Activated CD8-positive, alpha-beta T cell treated with anti-CD3 and anti-CD28 coated beads for 36 hours (primary cell): ENCODE measurements at regions of chr2 and their contacts with region 1.

Region 1: DNA sequence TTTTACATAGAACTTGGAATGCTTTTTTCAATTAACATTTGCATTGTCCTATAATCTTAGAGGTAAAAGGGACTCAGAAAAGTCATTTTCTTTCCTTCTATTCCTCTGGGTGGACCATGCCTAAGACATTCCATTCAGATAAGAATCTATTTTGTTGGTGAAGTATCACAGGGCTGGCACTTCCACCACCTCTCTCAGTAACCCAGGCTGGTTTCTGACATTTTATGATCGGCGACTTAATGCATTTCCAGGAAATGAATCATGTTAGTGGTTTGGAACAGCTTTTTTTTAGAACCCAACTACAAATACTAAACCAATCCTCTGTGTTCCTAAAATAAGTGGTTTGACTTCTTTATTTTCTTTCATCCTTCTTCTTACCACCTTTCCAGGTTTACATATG is 27.0 kb downstream of the GAD1 start:
- DNase-seq: peak; percentile 39
- ATAC-seq: peak; percentile 79
- H3K4me3 Mint-ChIP-seq: no peak overlapping the region
- H3K27ac Mint-ChIP-seq: peak overlapping the region; percentile 16
- H3K4me1 Mint-ChIP-seq: peaks cover 21% of the 10 kb centered on the region
- H3K27me3 Mint-ChIP-seq: peaks cover 10% of the 10 kb centered on the region
- CTCF ChIP-seq: no peak

Region 2: DNA sequence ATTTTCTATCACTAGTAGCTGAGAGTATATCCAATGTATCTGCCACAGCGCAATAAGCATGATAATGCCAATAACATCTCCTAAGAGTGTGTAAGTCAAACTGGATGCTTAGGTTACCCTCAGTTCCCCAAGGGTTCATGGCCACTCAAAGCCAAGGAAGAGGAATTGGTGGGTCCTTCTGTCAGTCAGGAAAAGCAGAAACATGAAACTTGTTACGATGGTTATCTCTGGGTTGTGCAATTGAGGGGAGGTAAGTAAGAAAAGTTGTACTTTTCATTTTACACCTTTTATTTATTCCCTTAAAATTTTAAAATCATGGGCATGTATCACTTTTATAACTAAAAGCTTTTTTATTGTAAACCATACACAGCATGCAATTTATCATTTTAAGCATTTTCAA is 37.1 kb before region 1 on chr2:
- CTCF ChIA-PET with region 1: no interaction called
- POLR2A ChIA-PET with region 1: no interaction called
- intact Hi-C with region 1: no loop called
- DNase-seq: no peak
- ATAC-seq: no peak
- H3K4me3 Mint-ChIP-seq: no peak overlapping the region
- H3K27ac Mint-ChIP-seq: no peak overlapping the region
- H3K4me1 Mint-ChIP-seq: no peaks in the 10 kb centered on the region
- H3K27me3 Mint-ChIP-seq: peaks cover 5% of the 10 kb centered on the region
- CTCF ChIP-seq: no peak

Region 3: DNA sequence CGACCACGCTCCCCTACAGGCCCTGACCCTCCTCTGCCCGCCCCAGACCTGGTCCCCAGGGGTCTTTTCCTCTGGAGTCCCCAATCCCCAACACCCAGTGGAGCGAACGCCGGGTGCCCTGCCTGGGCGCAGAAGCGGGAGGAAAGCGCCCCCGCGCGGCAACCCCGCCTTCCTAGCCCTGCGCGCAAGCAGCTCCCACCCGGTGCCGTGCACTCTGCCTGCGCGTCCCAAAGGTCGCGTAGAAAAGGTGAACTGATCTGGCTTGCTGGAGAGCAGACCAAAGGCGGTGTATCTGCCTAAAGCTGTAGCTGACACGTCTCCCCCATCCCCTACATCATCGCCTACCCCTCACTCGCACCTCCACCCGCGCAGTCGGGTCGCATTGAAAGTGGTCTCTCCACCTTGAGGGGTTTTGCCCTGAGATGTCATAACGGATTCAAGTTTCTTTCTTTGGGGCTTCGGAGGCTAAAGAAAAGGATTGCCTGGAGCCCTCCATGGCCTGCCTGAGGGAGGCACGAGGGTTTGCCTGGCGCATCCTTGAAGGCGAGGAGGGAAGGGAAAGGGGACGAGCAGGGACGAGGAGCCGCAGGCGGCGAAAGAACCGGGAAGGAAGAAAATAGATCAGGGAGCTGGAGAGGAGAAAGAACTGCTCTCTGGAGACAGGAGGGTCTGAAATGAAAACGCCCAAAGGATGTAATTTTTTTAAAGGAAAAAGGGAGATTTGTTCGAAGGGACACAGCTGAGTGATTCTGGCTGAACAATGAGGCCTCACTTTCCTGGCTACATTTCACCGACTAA is 21.2 kb before region 1 on chr2:
- CTCF ChIA-PET with region 1: interaction called, 13 read pairs
- POLR2A ChIA-PET with region 1: no interaction called
- intact Hi-C with region 1: no loop called
- DNase-seq: peak; percentile 65
- ATAC-seq: peak; percentile 63
- H3K4me3 Mint-ChIP-seq: peak overlapping the region; percentile 48
- H3K27ac Mint-ChIP-seq: no peak overlapping the region
- H3K4me1 Mint-ChIP-seq: peaks cover 37% of the 10 kb centered on the region
- H3K27me3 Mint-ChIP-seq: peaks cover 75% of the 10 kb centered on the region
- CTCF ChIP-seq: no peak

Region 4: GRCh38 chr2:170878505-170878904 is 34.8 kb after region 1 on chr2:
- CTCF ChIA-PET with region 1: interaction called, 73 read pairs
- POLR2A ChIA-PET with region 1: interaction called, 3 read pairs
- intact Hi-C with region 1: no loop called
- DNase-seq: no peak
- ATAC-seq: peak; percentile 65
- H3K4me3 Mint-ChIP-seq: no peak overlapping the region
- H3K27ac Mint-ChIP-seq: no peak overlapping the region
- H3K4me1 Mint-ChIP-seq: peaks cover 7% of the 10 kb centered on the region
- H3K27me3 Mint-ChIP-seq: peaks cover 1% of the 10 kb centered on the region
- CTCF ChIP-seq: no peak

Region 5: DNA sequence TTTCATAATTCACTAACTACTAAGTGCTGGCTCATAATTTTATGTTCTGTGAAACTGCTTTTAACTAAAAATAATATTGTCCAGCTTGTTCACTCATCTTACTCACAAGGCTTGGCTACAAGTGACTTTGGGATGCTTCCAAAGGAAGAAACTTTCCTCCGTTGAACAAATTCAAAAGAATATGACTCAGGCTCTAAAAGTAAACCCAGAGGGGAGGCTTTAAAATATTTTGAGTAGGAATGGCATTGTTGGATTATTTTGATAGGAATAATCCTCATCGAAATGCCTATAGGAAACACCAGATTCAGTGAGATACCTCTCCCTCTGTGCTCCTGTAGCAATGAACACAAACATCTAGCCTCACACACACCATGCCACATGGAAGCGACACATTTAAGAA is 342.3 kb after region 1 on chr2:
- CTCF ChIA-PET with region 1: no interaction called
- POLR2A ChIA-PET with region 1: no interaction called
- intact Hi-C with region 1: no loop called
- DNase-seq: no peak
- ATAC-seq: no peak
- H3K4me3 Mint-ChIP-seq: no peak overlapping the region
- H3K27ac Mint-ChIP-seq: no peak overlapping the region
- H3K4me1 Mint-ChIP-seq: peaks cover 2% of the 10 kb centered on the region
- H3K27me3 Mint-ChIP-seq: peaks cover 2% of the 10 kb centered on the region
- CTCF ChIP-seq: no peak